HEK293 (cell line): ENCODE measurements at regions of chr11 and their contacts with region 1.

Region 1: DNA sequence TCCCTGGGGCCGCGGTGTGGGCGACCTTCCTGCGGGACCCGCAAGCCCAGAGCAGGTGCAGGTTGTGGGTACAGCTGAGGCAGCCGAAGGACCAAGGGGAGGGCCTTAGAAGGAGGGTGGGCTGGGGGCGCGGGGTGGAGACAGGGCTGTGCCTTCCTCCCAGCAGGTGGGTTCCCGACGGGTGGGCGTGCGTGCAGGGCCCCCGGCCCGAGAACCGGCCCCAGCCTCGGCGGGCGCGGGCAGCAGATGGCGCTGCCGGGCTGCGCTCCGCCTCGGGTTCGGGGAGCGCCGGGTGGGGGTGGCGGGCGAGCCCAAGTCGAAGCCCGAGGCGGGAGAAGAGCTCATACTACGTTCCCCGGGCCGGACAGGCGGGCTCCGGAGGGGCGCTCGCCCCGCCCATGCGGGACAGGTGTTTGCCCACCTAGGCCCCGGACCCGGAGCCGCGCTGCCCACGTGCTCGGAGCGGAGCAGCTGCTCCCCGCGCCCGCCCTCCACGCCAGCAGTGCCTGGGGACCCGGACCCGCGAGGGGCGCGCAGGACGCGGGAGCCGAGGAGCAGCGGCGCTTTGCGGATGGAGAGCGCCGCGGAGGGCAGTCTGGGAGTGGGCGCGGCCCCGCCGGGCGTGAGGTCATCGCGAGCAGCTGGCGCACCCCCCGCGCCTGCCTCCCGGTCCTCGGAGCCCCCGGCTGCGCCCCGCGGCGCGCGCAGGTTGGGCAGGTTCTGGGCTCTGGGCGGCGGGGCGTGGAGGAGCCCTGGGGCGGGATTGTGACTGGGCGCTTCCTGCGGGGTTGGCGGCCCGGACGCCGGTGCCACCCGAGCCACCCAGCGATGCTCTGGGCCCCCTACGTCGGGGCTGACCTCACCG is 25.3 kb downstream of the DUSP8 start:
- H3K4me3 ChIP-seq: peak overlapping the region; percentile 36
- H3K27ac ChIP-seq: no peak overlapping the region
- H3K4me1 ChIP-seq: peaks cover 3% of the 10 kb centered on the region; the same call in 1 of the 2 replicates
- CTCF ChIP-seq: peak; percentile 46; the same call in 1 of the 2 replicates

Region 2: GRCh38 chr11:680476-680875 is 866.3 kb before region 1 on chr11:
- CTCF ChIA-PET with region 1: no interaction called
- POLR2A ChIA-PET with region 1: no interaction called
- H3K4me3 ChIP-seq: no peak overlapping the region
- H3K27ac ChIP-seq: no peak overlapping the region
- H3K4me1 ChIP-seq: no peaks in the 10 kb centered on the region
- CTCF ChIP-seq: no peak

Region 3: DNA sequence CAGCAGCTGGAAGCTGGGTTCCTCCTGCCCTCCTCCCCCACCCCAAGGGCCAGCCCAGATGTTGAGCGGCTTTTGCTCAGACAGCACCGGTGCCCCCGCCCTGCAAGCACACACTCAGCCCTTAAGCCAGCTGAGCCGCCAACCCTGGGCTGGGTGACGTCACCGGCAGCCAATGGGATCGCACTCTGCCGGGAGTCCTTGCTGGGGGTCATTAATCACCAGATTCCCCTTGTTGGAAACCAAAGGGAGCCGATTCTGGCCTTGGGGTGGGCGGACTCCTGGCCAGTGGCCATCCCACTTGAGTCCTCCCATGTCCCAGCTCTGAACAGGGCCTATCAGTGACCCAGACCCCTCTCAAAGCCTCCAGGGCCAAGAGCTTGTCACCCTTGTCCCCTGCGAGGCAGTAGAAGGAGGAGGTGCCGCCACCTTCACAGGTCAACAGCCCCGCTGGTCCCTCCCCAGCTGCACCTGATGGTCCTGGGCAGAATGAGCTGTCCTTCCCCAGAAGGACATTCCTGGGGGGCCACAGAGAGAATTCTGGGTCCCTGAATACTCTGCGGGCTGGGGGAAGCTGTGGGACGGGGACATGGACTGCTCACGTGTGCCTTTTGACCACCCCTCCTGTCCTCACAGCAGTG is 17.9 kb after region 1 on chr11:
- CTCF ChIA-PET with region 1: interaction called, 12 read pairs
- POLR2A ChIA-PET with region 1: interaction called, 4 read pairs
- H3K4me3 ChIP-seq: no peak overlapping the region
- H3K27ac ChIP-seq: no peak overlapping the region
- H3K4me1 ChIP-seq: no peaks in the 10 kb centered on the region
- CTCF ChIP-seq: no peak

Region 4: DNA sequence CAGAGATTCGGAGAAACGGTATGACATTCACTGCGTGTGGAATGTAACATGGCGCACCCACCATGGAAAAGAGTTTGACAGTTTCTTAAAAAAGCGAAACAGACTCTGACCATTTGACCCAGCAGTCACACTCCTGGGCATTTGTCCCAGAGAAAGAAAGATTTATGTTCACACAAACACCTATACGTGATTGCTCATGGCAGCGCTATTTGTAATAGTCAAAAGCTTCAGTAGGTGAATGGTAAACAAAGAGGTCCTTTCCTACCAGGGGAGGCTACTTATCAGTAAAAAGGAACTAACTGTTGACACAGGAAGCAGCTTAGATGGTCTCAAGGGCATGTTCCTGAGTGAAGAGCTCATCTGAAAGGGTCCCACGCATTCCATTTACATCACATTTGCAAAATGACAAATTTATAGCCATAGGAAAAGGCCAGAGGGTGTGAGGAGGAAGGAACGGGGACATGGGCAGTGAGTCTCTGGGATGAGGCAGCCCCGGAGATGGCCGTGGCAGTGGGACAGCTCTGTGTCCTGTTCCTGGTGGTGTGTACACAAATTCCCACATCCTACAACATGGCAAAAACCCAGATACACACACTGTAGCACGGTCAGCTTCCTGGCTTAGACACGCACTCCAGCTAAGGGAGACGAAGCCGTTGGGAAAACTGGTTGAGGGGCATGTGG is 135.6 kb after region 1 on chr11:
- CTCF ChIA-PET with region 1: no interaction called
- POLR2A ChIA-PET with region 1: no interaction called
- H3K4me3 ChIP-seq: no peak overlapping the region
- H3K27ac ChIP-seq: no peak overlapping the region
- H3K4me1 ChIP-seq: no peaks in the 10 kb centered on the region
- CTCF ChIP-seq: no peak